A549 (cell line): ENCODE measurements at regions of chr17 and their contacts with region 1.

Region 1: GRCh38 chr17:19513897-19514488 is 19.7 kb upstream of the SLC47A1 start:
- DNase-seq: peak; percentile 72 to 82
- ATAC-seq: peak; percentile 91 to 92
- H3K4me3 ChIP-seq: no peak overlapping the region
- H3K27ac ChIP-seq: peak overlapping the region; percentile 19 to 33; a peak in 2 of 6 replicates
- H3K4me1 ChIP-seq: peaks cover 4% of the 10 kb centered on the region; the same call in 1 of the 3 replicates
- CTCF ChIP-seq: peak; percentile 99
- EP300 ChIP-seq: no peak
- POLR2A ChIP-seq: no peak
- RAD21 ChIP-seq: peak; percentile 99 to 100

Region 2: GRCh38 chr17:19533718-19534561 is 19.9 kb after region 1 on chr17 and contains the start of gene SLC47A1:
- CTCF ChIA-PET with region 1: interaction called, 33 read pairs
- POLR2A ChIA-PET with region 1: no interaction called
- DNase-seq: peak; percentile 72 to 76
- ATAC-seq: peak; percentile 96 to 99
- H3K4me3 ChIP-seq: peak within 1 kb of the TSS; percentile 64
- H3K27ac ChIP-seq: peak within 1 kb of the TSS; percentile 75 to 89
- H3K4me1 ChIP-seq: peaks cover 10% of the 10 kb centered on the region; the same call in 2 of the 3 replicates
- CTCF ChIP-seq: no peak
- EP300 ChIP-seq: no peak
- POLR2A ChIP-seq: peak; percentile 83
- RAD21 ChIP-seq: no peak
- polyA plus RNA-seq, gene SLC47A1: 21.1 and 35.1 TPM in 2 replicates

Region 3: DNA sequence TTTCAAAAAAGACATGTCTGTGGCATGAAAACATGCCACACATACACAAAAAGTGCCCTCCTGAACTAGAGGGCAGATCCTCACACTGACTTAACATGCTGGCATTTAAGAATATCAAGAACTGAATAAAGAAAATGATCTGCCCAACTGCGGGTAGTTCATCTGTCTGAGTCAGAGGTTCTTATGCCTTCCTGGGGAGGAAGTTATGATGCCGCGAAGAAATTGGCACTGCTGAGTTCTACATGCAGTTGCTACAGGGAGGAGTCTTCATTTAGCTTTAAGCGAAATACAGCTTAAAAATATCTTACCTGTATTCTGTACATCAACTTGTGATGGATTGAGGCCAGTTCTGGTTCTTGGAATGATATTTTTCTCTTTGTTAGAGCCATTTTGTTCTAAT is 140.9 kb after region 1 on chr17:
- CTCF ChIA-PET with region 1: interaction called, 10 read pairs
- POLR2A ChIA-PET with region 1: no interaction called
- DNase-seq: no peak
- ATAC-seq: no peak
- H3K4me3 ChIP-seq: no peak overlapping the region
- H3K27ac ChIP-seq: no peak overlapping the region
- H3K4me1 ChIP-seq: peaks cover 46% of the 10 kb centered on the region
- CTCF ChIP-seq: no peak
- EP300 ChIP-seq: no peak
- POLR2A ChIP-seq: no peak
- RAD21 ChIP-seq: no peak

Region 4: DNA sequence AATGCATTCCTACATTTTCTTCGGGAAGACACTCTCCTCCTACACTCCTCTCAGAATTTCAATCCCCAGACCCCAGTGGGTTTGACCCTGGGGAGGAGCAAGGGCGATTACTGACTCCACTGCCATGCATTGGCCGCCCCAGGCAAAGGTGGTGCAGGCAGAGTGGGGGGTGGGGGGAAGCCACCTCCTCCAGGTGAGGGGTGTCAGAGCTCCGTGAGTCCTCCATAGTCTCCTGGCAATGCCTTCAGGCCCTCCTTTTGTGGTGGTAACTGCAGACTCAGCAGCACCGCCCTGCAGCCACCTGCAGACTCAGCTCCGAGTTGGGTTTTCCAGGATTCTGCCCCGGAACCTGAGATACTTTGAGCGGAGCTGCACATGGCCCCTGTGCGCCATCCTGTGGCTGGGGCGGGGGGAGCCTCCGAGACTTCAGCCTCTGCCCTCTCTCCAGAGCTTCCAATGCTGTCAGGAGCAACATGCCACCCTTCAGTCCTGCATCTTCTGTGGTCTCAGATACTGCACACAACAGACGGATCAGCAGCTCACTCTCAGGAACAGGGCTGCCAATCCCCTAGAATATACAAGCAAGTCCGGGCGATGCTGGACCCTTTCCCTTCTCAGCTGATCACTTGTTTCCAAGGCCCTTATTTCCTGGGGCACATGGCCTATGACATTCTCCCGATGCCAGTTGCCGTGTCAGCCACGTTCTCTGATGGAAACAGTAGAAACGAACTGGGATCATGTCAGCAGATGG is 204.8 kb after region 1 on chr17:
- CTCF ChIA-PET with region 1: interaction called, 15 read pairs
- POLR2A ChIA-PET with region 1: no interaction called
- DNase-seq: peak in 1 of 2 experiments; percentile 65
- ATAC-seq: peak; percentile 40 to 67
- H3K4me3 ChIP-seq: no peak overlapping the region
- H3K27ac ChIP-seq: peak overlapping the region; percentile 49 to 82
- H3K4me1 ChIP-seq: peaks cover 57% of the 10 kb centered on the region
- CTCF ChIP-seq: peak; percentile 43
- EP300 ChIP-seq: no peak
- POLR2A ChIP-seq: no peak
- RAD21 ChIP-seq: peak; percentile 62 to 75

Region 5: DNA sequence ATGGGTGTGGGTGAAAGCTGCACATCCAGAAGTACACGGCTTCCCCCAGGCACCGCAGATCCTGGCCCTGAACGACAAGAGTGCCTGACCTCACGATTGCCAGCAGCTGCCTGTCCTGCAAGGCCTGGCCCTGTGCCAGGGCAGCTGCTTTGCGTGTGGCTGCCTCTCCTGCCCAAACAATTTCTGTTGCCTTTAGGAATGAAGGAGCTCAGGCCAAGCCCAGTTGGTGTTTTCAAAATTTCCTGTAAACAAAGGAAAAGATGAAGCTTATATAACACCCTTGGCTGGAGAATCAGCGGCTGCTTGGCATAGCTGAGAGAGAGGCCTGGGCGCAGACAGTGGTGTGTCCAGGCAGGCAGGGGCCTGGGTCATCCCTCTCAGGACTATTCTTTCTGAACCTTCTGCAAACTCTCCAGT is 214.1 kb after region 1 on chr17:
- CTCF ChIA-PET with region 1: interaction called, 10 read pairs
- POLR2A ChIA-PET with region 1: no interaction called
- DNase-seq: peak in 1 of 2 experiments; percentile 69
- ATAC-seq: peak; percentile 52 to 54; a peak in 5 of 6 replicates
- H3K4me3 ChIP-seq: no peak overlapping the region
- H3K27ac ChIP-seq: peak overlapping the region; percentile 67 to 82
- H3K4me1 ChIP-seq: peaks cover 35% of the 10 kb centered on the region
- CTCF ChIP-seq: no peak
- EP300 ChIP-seq: no peak
- POLR2A ChIP-seq: no peak
- RAD21 ChIP-seq: no peak

Region 6: GRCh38 chr17:19744922-19745757 is 231.1 kb after region 1 on chr17:
- CTCF ChIA-PET with region 1: interaction called, 17 read pairs
- POLR2A ChIA-PET with region 1: interaction called, 3 read pairs
- DNase-seq: peak; percentile 75 to 89
- ATAC-seq: peak; percentile 12 to 62; a peak in 5 of 6 replicates
- H3K4me3 ChIP-seq: peak overlapping the region; percentile 53; the same call in 2 of the 3 replicates
- H3K27ac ChIP-seq: peak overlapping the region; percentile 98 to 100
- H3K4me1 ChIP-seq: peaks cover 80% of the 10 kb centered on the region
- CTCF ChIP-seq: peak; percentile 81
- EP300 ChIP-seq: no peak
- POLR2A ChIP-seq: peak; percentile 52
- RAD21 ChIP-seq: peak; percentile 55 to 64

Region 7: DNA sequence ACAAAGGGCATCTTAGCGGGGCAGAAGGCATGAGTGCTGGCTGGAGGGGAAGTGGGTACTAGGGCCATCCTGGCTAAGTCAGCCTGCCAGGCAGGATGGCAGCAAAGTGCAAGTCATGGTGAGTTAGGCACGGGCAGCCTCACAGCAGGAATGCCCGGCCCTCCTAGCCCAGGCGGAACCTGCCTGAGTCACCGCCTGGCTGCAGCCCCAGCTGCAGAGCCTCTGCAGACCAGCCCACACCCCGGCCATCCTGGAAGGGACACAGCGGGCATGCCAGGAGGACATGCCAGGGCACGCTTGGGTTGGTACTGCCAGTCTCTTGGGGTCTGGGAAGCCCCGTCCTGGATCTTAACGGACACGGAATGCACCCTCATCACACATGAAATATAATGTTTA is 239.1 kb after region 1 on chr17:
- CTCF ChIA-PET with region 1: interaction called, 43 read pairs
- POLR2A ChIA-PET with region 1: no interaction called
- DNase-seq: peak; percentile 98 to 99
- ATAC-seq: peak; percentile 83 to 90
- H3K4me3 ChIP-seq: no peak overlapping the region; the same call in 2 of the 3 replicates
- H3K27ac ChIP-seq: peak overlapping the region; percentile 98 to 100
- H3K4me1 ChIP-seq: peaks cover 65% of the 10 kb centered on the region
- CTCF ChIP-seq: no peak
- EP300 ChIP-seq: peak; percentile 87 to 96; a peak in 4 of 5 replicates
- POLR2A ChIP-seq: peak; percentile 54
- RAD21 ChIP-seq: peak in 1 of 2 experiments; percentile 41; a peak in 2 of 5 replicates